ENCODE measurements at regions of chr5 and their contacts with region 1.

Region 1: GRCh38 chr5:57804007-57804444 is 321.4 kb upstream of the ACTBL2 start:
- DNase-seq: no peak
- ATAC-seq: no peak

Region 2: GRCh38 chr5:57842364-57843058 is 38.5 kb after region 1 on chr5:
- intact Hi-C with region 1: loop called (anchors 1 kb)
- DNase-seq: no peak
- ATAC-seq: no peak

Region 3: GRCh38 chr5:58060996-58061395 is 257.0 kb after region 1 on chr5:
- intact Hi-C with region 1: no loop called
- DNase-seq: no peak
- ATAC-seq: peak; percentile 67

Region 4: GRCh38 chr5:58240286-58240685 is 436.3 kb after region 1 on chr5:
- intact Hi-C with region 1: no loop called
- DNase-seq: no peak
- ATAC-seq: no peak

Measured in Right ventricle myocardium inferior (tissue), 1 donor.